Adrenal gland (tissue), 19 donors: ENCODE measurements at regions of chr14 and their contacts with region 1.

Region 1: DNA sequence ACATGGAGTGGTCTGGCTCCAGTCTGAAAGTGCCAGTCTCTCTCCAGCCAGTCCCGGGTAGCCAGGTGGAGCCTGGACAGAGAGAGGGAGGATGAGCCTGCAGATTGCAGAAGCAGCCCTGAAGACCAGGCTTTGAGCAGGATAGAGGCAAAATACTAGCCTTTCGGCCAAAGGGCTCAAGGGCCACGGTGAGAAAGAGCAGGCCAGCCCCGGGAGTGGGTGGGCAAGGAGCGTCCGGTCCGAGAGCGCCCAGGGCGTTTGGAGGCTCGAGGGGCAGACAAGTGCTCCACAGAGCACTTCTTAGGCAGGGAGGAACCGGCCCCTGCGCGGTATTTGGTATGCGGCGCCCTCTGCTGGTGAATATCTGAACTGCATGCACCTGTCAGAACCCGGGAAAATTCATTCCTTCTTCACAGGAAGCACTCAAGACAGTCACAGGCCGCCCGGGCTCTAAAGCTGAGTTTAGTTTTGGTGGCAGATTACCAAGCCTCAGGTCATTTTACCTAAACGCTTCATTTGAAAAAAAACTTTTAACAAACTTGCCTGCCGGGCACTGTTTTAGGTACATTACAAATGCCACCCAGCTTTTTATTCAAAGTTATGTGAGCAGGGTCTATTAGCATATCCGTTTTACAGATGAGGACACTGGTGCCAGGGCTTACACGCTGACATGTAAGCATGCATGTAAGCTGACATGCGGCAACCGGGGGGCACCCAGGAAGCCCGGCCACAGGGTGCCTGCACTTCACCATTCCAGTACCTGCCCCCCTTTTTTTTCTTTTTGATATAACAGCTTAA is 21.0 kb upstream of the PSMC1 start:
- DNase-seq: peak; percentile 34 to 85 (median 68)
- H3K4me3 ChIP-seq: no peak overlapping the region
- H3K27ac ChIP-seq: no peak overlapping the region
- H3K4me1 ChIP-seq: no peaks in the 10 kb centered on the region
- H3K27me3 ChIP-seq: peaks cover 2% of the 10 kb centered on the region
- CTCF ChIP-seq: peak; percentile 86 to 98 (median 92)
- POLR2A ChIP-seq: no peak

Region 2: DNA sequence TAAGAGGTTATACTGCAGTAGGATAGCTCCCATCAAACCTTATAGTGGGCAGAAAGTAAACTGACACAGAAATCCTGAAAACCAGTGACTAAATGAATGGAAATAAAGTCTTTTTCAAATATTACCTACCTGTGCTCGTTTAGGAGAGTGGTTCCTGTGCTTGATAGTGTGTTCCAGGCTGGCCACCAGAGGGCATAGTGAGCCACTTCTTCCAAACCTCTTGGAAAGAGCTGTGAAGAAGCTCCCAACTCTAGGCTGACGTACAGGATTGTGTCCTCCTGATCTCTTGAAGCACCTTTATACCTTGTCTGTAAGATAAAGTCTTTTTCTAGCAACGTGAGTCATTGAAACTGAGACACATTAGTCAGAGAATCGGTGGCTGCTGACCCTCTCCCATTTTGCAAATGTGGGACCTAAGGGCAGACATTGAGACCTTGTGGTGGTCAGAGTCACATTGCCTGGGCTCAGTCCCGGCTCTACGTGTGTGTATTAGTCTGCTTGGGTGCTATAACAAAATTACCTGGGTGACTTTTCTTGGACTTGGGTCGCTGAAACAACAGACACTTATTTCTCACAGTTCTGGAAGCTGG is 262.0 kb before region 1 on chr14:
- intact Hi-C with region 1: loop called (anchors 2 to 10 kb)
- DNase-seq: peak; percentile 65 to 89 (median 74)
- H3K4me3 ChIP-seq: no peak overlapping the region
- H3K27ac ChIP-seq: no peak overlapping the region
- H3K4me1 ChIP-seq: no peaks in the 10 kb centered on the region
- H3K27me3 ChIP-seq: no peaks in the 10 kb centered on the region
- CTCF ChIP-seq: peak; percentile 64 to 91 (median 78)
- POLR2A ChIP-seq: no peak